Activated T-helper 2 cell treated with anti-CD3 and anti-CD28 coated beads, Interferon-gamma antibody, Interleukin-2, Interleukin-4, amounts not matched to agents 10 μg/mL and 5 μg/mL and 100 μg/mL, durations not matched to agents 14 hours and 24 hours and 36 hours (primary cell): ENCODE measurements at regions of chr15 and their contacts with region 1.

Region 1: DNA sequence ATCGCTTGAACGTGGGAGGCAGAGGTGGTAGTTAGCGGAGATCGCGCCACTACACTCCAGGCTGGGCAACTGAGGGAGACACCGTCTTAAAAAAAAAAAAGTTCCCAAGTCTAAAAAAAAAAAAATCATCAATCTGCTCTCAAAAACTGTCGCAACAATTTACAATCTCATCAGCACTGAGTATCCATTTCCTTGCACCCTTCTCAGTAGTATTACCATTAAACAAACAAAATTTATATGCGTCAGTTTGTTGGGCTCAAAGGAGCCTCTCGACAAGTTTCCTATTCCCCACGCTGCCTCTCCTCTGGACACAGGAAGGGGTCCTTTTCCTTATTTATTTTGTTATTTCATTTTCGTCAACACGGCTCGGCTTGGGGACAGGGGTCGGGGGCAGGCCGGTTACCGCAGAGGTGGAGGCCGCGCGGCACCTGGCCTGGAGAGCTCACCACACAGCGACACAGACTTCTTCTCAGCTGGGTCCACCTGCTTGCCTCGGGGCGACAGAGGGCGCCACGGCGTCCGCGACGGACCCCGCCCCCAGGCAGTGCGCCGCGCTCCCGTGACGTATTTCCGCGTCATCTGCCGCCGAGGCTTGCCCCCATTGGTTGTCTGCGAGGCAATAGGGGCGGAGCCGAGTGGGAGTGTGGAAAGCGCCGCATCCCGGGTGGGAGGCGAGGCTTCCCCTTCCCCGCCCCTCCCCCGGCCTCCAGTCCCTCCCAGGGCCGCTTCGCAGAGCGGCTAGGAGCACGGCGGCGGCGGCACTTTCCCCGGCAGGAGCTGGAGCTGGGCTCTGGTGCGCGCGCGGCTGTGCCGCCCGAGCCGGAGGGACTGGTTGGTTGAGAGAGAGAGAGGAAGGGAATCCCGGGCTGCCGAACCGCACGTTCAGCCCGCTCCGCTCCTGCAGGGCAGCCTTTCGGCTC is at the start of gene MAP2K1:
- DNase-seq: peak; percentile 98
- H3K4me3 Mint-ChIP-seq: peak within 1 kb of the TSS; percentile 99
- H3K27ac Mint-ChIP-seq: peak within 1 kb of the TSS; percentile 99
- H3K4me1 Mint-ChIP-seq: peaks cover 39% of the 10 kb centered on the region
- H3K27me3 Mint-ChIP-seq: no peaks in the 10 kb centered on the region
- total RNA-seq, gene MAP2K1: 107 and 111 TPM in 2 replicates

Region 2: DNA sequence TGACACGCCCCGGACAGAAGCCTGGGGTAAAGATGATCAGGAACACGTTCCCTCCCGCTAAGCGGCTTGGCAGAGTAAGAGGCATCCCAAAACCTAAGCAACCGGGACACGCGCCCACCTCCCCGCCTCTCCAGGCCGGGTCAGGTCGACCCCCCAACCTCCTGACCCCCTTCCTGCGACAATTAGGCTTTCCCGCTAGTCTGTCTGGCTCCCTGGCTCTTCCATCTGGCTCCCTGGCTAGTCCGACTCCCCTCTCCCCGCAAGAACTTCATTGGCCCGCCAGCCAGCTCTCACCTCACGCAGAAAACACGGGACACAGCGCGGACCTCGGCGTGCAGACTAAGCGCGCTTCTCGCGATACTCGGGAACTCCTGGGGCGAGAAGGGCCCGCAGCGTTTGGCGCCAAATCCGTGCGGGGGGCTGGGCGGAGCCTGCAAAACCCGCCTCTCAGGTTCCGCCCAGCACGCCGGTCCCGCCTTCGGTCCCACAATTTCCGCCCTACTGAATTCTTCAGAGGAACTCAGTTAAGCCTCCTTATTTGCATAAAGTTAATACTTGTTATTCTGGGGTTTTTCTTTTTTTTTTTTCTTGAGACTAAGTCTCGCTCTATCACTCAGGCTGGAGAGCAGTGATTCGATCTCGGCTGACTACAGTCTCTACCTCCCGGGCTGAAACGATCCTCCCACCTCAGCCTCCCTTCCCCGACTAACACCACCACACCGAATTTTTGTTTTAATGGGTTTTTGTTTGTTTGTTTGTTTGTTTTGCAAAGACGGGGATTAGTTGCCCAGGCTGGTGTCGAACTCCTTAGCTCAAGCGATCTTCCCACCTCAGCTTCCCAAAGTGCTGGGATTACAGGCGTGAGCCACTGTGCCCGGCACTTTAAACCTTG is 29.9 kb before region 1 on chr15 and contains the start of gene TIPIN:
- intact Hi-C with region 1: loop called (anchors 1 kb)
- DNase-seq: peak; percentile 96
- H3K4me3 Mint-ChIP-seq: peak within 1 kb of the TSS; percentile 97
- H3K27ac Mint-ChIP-seq: peak within 1 kb of the TSS; percentile 97
- H3K4me1 Mint-ChIP-seq: peaks cover 25% of the 10 kb centered on the region
- H3K27me3 Mint-ChIP-seq: no peaks in the 10 kb centered on the region
- total RNA-seq, gene TIPIN: 42.4 and 43.3 TPM in 2 replicates

Region 3: DNA sequence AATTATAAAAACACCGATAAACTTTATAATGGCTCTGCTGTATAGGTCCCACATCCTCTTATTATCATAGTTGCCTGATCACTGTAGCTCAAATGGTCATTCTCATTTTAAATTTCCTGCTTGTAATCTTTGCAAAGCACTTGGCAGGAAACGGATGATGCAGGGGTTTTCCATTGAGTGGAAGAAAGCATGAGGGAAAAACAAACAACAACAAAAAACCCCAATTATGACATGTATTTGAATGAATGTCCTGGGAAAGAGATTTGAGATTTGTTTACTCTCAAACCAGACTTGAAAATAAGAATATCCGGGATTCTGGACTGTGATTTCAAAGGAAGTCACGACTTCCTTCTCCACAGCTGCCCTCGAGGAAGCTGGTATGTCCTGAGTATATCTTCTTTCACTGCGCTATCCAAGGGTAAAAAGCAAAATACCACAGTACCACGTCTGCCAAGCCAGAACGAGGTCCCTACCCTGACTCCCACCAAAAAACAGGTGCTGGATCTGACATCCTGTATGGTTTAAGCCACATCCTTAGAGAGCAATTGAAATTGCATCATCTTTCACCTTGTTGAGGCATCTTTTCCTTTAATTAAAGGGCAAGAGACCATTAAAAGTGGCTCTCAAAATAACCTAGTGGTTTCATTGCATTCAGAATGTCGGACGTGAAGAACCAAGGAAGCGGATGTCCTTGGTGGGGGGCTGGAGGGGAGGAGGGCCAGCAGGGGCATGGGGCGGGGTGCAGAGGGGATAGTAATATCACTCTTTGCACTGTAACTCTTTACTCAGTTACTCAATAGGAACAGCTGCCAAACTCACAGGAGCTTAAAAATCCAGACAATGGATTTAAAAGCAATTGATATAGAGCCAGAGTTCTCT is 16.5 kb before region 1 on chr15:
- intact Hi-C with region 1: loop called (anchors 1 kb)
- DNase-seq: peak; percentile 20
- H3K4me3 Mint-ChIP-seq: peak overlapping the region; percentile 73
- H3K27ac Mint-ChIP-seq: peak overlapping the region; percentile 97
- H3K4me1 Mint-ChIP-seq: peaks cover 19% of the 10 kb centered on the region
- H3K27me3 Mint-ChIP-seq: no peaks in the 10 kb centered on the region

Region 4: GRCh38 chr15:66401130-66402021 is 14.9 kb after region 1 on chr15:
- intact Hi-C with region 1: loop called (anchors 1 kb)
- DNase-seq: peak; percentile 10
- H3K4me3 Mint-ChIP-seq: peak overlapping the region; percentile 51
- H3K27ac Mint-ChIP-seq: peak overlapping the region; percentile 53
- H3K4me1 Mint-ChIP-seq: peaks cover 66% of the 10 kb centered on the region
- H3K27me3 Mint-ChIP-seq: no peaks in the 10 kb centered on the region

Region 5: DNA sequence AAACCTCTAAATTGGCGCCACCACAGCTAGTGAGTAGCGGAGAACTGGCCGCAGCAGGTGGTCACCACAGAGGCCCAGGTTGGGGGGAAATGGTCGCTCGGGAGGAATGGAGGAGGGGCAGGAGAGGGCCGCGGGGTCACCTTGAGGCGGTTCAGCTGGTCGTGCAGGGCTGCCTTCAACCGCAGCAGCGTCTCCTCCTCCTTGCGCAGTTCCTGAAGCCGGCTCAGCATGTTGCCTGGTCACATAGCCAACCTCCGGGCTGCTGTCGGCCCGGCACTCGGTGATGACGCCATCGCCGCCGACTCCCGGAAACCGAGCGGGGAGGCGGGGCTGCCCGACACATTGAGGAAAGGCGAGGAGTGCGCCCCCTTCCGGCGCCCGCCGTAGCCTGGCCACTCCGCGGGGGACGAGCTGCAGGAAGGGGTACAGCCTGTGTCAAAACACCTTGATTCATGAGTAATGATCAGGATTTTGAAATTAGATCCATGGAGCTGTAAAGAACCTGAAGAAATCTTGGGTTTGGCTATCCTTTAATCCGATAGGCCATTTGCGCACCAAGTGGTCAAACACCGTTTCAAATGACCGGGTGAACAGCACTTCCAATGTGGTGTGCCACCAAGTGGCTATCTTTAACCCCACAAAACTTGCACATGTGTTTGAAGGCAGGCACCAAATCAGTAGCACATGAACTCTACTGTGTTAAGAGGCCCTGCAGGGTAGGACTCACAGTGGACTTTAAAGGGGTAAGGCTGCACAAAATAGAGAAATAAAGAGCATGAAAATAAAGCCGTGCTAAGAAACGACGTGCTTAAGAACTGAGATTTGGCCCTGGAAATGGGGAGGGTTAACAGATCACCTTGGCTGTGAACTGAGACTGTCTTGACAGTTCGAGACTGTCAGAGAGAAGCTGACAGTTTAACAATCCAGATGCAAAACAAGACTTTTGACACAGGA is 111.3 kb after region 1 on chr15 and contains the start of gene SNAPC5:
- intact Hi-C with region 1: loop called (anchors 1 kb)
- DNase-seq: peak; percentile 96
- H3K4me3 Mint-ChIP-seq: peak within 1 kb of the TSS; percentile 95
- H3K27ac Mint-ChIP-seq: peak within 1 kb of the TSS; percentile 93
- H3K4me1 Mint-ChIP-seq: peaks cover 35% of the 10 kb centered on the region
- H3K27me3 Mint-ChIP-seq: no peaks in the 10 kb centered on the region
- total RNA-seq, gene SNAPC5: 23.2 and 23.9 TPM in 2 replicates